GM12878 (cell line): ENCODE measurements at regions of chr17 and their contacts with region 1.

Region 1: GRCh38 chr17:62065598-62066468 is 755 bp upstream of the MED13 start:
- DNase-seq: peak; percentile 88
- ATAC-seq: peak; percentile 95
- H3K4me3 ChIP-seq: peak overlapping the region; percentile 79
- H3K27ac ChIP-seq: peak overlapping the region; percentile 92
- H3K4me1 ChIP-seq: peaks cover 6% of the 10 kb centered on the region
- H3K27me3 ChIP-seq: no peaks in the 10 kb centered on the region
- CTCF ChIP-seq: peak; percentile 85 to 91 (median 88); a peak in 5 of 6 replicates
- EP300 ChIP-seq: 0 out of 4 replicates have a peak, but pooled peaks of 1 of the 2 experiments have one; percentile 30
- POLR2A ChIP-seq: peak; percentile 87
- RAD21 ChIP-seq: peak; percentile 56

Region 2: GRCh38 chr17:62052757-62053338 is 13.0 kb before region 1 on chr17:
- CTCF ChIA-PET with region 1: interaction called, 28 read pairs
- POLR2A ChIA-PET with region 1: interaction called, 5 read pairs
- RAD21 ChIA-PET with region 1: interaction called, 7 read pairs
- SMC1A ChIA-PET with region 1: interaction called, 11 read pairs
- in situ Hi-C with region 1: no loop called
- intact Hi-C with region 1: no loop called
- DNase-seq: no peak
- ATAC-seq: no peak
- H3K4me3 ChIP-seq: no peak overlapping the region
- H3K27ac ChIP-seq: no peak overlapping the region
- H3K4me1 ChIP-seq: no peaks in the 10 kb centered on the region
- H3K27me3 ChIP-seq: no peaks in the 10 kb centered on the region
- CTCF ChIP-seq: no peak
- EP300 ChIP-seq: no peak
- POLR2A ChIP-seq: no peak
- RAD21 ChIP-seq: no peak

Region 3: DNA sequence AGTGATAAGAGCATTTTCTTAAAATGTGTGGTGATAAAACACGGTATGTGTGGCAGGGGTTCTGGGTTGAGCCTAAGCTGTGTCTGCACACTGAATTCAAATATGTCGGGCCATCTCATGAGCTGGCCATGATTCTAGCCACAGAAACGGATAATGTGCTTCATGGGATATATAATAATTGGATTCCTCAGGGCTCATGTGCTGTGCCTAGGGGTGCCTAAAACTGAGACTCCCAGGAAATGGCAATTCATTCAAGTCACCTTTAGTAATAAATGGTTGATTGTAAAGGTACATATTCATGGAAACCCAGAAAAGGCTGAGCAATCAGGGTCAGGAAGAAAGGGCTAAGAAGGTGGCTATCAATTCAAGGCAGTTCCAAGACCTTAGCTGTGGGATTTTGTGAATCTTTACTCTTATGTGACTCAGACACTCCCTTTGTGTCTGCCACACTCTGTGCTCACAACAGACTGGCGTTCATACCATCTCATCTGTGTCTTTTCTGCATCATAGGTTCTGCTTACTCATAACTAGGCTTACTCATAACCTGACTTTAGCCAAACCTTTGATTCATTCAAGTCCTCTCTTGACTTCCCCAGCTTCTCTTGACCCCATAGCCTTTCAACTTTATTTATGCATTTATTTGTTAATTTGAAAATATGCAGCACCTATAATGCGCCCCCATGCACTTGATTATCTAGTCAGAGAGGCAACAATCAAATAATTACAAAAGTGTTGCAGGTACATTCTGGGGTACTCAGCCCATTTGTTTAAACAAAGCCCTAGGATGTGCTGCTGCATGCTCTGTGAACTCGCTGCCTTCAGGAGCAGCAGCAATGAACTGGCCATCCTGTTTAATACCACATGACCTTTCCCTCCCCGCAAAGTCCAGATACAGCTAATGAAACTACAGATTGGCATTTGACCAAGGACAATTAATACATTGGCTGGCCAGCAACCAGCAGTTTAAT is 27.6 kb after region 1 on chr17:
- CTCF ChIA-PET with region 1: interaction called, 22 read pairs
- POLR2A ChIA-PET with region 1: interaction called, 3 read pairs
- RAD21 ChIA-PET with region 1: interaction called, 14 read pairs
- SMC1A ChIA-PET with region 1: interaction called, 8 read pairs
- in situ Hi-C with region 1: no loop called
- intact Hi-C with region 1: no loop called
- DNase-seq: peak; percentile 90
- ATAC-seq: peak; percentile 96
- H3K4me3 ChIP-seq: peak overlapping the region; percentile 56; the same call in 1 of the 2 replicates
- H3K27ac ChIP-seq: peak overlapping the region; percentile 74
- H3K4me1 ChIP-seq: peaks cover 37% of the 10 kb centered on the region
- H3K27me3 ChIP-seq: no peaks in the 10 kb centered on the region
- CTCF ChIP-seq: no peak
- EP300 ChIP-seq: peak; percentile 65 to 94; a peak in 3 of 4 replicates
- POLR2A ChIP-seq: peak; percentile 26; the same call in 1 of the 2 replicates
- RAD21 ChIP-seq: no peak

Region 4: GRCh38 chr17:62098623-62099231 is 32.9 kb after region 1 on chr17:
- CTCF ChIA-PET with region 1: interaction called, 22 read pairs
- POLR2A ChIA-PET with region 1: interaction called, 3 read pairs
- RAD21 ChIA-PET with region 1: interaction called, 14 read pairs
- SMC1A ChIA-PET with region 1: interaction called, 8 read pairs
- in situ Hi-C with region 1: no loop called
- intact Hi-C with region 1: no loop called
- DNase-seq: peak; percentile 83
- ATAC-seq: peak; percentile 92
- H3K4me3 ChIP-seq: 0 out of 2 replicates have a peak overlapping the region, but pooled peaks have one; percentile 7
- H3K27ac ChIP-seq: peak overlapping the region; percentile 82
- H3K4me1 ChIP-seq: peaks cover 33% of the 10 kb centered on the region
- H3K27me3 ChIP-seq: no peaks in the 10 kb centered on the region
- CTCF ChIP-seq: no peak
- EP300 ChIP-seq: peak; percentile 70 to 72; a peak in 3 of 4 replicates
- POLR2A ChIP-seq: no peak
- RAD21 ChIP-seq: no peak

Region 5: DNA sequence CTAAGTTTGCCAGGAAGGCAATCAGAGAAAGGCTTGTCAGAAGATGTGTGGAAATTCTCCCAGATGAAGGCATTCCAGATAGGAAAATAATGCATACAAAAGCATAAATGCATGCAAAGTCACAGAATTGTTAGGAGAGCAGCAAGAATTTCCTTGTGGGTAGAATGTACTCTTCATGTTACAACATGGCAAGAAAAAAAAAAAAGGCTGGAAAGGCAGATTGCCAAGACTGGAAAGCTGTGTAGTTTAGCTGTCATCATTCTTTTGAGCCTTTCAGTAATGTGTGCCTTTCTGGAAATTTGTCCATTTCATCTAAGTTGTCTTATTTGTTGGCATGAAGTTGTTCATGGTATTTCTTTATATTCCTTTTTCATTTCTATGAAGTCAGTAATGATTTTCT is 243.6 kb after region 1 on chr17:
- CTCF ChIA-PET with region 1: no interaction called
- POLR2A ChIA-PET with region 1: no interaction called
- RAD21 ChIA-PET with region 1: no interaction called
- SMC1A ChIA-PET with region 1: no interaction called
- in situ Hi-C with region 1: no loop called
- intact Hi-C with region 1: no loop called
- DNase-seq: no peak
- ATAC-seq: no peak
- H3K4me3 ChIP-seq: no peak overlapping the region
- H3K27ac ChIP-seq: no peak overlapping the region
- H3K4me1 ChIP-seq: no peaks in the 10 kb centered on the region
- H3K27me3 ChIP-seq: no peaks in the 10 kb centered on the region; a peak in 1 of 4 replicates
- CTCF ChIP-seq: no peak
- EP300 ChIP-seq: no peak
- POLR2A ChIP-seq: no peak
- RAD21 ChIP-seq: no peak